Activated T-helper 1 cell treated with anti-CD3 and anti-CD28 coated beads, Interleukin-12 subunit alpha, Interleukin-12 subunit beta, Interleukin-2, Interleukin-4 antibody, amounts not matched to agents 30 ng/mL and 10 ng/mL and 1 ng/mL, durations not matched to agents 14 hours and 24 hours and 36 hours (primary cell): ENCODE measurements at regions of chr1 and their contacts with region 1.

Region 1: GRCh38 chr1:89843281-89844121 is 22.7 kb downstream of the LRRC8D start:
- DNase-seq: peak; percentile 69
- H3K4me3 Mint-ChIP-seq: peak overlapping the region; percentile 93
- H3K27ac Mint-ChIP-seq: peak overlapping the region; percentile 91
- H3K4me1 Mint-ChIP-seq: peaks cover 81% of the 10 kb centered on the region
- H3K27me3 Mint-ChIP-seq: no peaks in the 10 kb centered on the region

Region 2: GRCh38 chr1:89632657-89633247 is 210.7 kb before region 1 on chr1 and contains the start of gene LRRC8C:
- intact Hi-C with region 1: loop called (anchors 2 kb)
- DNase-seq: peak; percentile 84
- H3K4me3 Mint-ChIP-seq: peak within 1 kb of the TSS; percentile 92
- H3K27ac Mint-ChIP-seq: peak within 1 kb of the TSS; percentile 96
- H3K4me1 Mint-ChIP-seq: peaks cover 77% of the 10 kb centered on the region
- H3K27me3 Mint-ChIP-seq: no peaks in the 10 kb centered on the region
- total RNA-seq, gene LRRC8C: 64.3 and 66.1 TPM in 2 replicates

Region 3: GRCh38 chr1:89804642-89805237 is 38.8 kb before region 1 on chr1:
- intact Hi-C with region 1: loop called (anchors 1 kb)
- DNase-seq: peak; percentile 71
- H3K4me3 Mint-ChIP-seq: no peak overlapping the region
- H3K27ac Mint-ChIP-seq: no peak overlapping the region
- H3K4me1 Mint-ChIP-seq: peaks cover 7% of the 10 kb centered on the region
- H3K27me3 Mint-ChIP-seq: peaks cover 4% of the 10 kb centered on the region

Region 4: DNA sequence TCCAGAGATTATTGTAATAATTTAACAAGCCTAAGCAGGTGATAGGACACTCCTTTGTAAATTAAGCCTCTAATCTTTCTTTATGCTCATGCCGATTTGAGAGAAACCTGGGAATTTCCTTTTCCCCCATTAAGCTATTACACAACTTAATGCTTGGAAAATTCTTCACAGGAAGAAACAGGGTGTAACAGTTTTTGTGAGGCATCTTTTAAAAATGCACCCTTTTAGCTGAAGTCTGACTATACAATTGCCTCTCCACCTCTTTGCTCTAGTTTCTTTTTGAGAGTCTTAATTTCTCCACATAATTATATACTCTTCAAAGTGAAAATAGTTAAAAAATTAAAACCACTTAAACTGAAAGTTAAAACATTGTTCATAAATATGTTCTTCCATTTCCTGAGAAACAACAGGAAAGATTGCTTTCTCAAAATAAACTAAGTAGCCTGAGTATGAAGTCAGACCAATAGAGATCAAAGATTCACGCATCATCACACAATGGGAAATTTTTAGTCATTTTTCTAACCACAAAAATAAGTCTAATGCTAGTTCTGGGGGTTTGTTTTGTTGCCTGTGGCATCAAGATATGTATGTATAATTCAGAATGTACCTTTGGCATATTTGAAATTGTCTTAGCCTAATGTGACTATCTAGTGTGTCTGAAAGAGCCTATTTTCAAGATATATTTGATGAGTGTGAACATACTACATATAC is 12.1 kb after region 1 on chr1:
- intact Hi-C with region 1: loop called (anchors 1 kb)
- DNase-seq: no peak
- H3K4me3 Mint-ChIP-seq: no peak overlapping the region
- H3K27ac Mint-ChIP-seq: no peak overlapping the region
- H3K4me1 Mint-ChIP-seq: peaks cover 4% of the 10 kb centered on the region
- H3K27me3 Mint-ChIP-seq: no peaks in the 10 kb centered on the region

Region 5: GRCh38 chr1:89907727-89908212 is 64.3 kb after region 1 on chr1:
- intact Hi-C with region 1: loop called (anchors 2 kb)
- DNase-seq: no peak
- H3K4me3 Mint-ChIP-seq: no peak overlapping the region
- H3K27ac Mint-ChIP-seq: peak overlapping the region; percentile 13
- H3K4me1 Mint-ChIP-seq: peaks cover 59% of the 10 kb centered on the region
- H3K27me3 Mint-ChIP-seq: no peaks in the 10 kb centered on the region

Region 6: DNA sequence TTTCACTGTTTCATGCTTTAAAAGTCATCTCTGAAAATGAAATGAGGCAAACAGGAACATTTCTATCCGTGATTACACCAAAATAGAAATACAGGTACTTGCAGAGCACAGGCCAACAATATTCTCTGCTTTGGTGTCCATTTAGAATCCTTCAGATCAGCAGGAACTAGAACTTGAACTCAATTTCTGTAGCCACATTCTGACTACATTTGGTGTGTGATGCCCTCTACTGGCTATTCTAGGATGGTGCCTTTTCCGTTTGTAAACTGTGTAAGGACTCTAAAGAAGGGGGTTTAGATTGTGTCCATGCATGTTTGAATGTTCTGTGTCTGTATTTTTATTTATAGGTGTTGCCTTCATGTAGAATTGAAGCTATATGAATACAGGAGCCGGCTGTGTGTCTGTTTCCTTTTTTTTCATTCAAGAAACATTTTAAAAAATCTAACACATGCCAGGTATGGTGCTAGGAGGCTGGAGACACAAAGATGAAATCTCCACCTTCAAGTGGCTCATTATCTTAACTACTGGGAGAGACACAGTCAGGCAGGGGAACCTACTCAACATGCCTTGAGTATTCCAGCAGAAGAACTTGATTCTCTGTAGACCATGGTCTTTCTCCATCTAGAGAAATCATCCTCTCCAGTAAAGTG is 143.8 kb after region 1 on chr1:
- intact Hi-C with region 1: loop called (anchors 1 kb)
- DNase-seq: peak; percentile 54
- H3K4me3 Mint-ChIP-seq: no peak overlapping the region
- H3K27ac Mint-ChIP-seq: no peak overlapping the region
- H3K4me1 Mint-ChIP-seq: peaks cover 11% of the 10 kb centered on the region
- H3K27me3 Mint-ChIP-seq: peaks cover 7% of the 10 kb centered on the region

Region 7: GRCh38 chr1:90964444-90965035 is 1121.0 kb after region 1 on chr1:
- intact Hi-C with region 1: no loop called
- DNase-seq: no peak
- H3K4me3 Mint-ChIP-seq: no peak overlapping the region
- H3K27ac Mint-ChIP-seq: no peak overlapping the region
- H3K4me1 Mint-ChIP-seq: peaks cover 15% of the 10 kb centered on the region
- H3K27me3 Mint-ChIP-seq: no peaks in the 10 kb centered on the region